Activated CD4-positive, alpha-beta T cell treated with anti-CD3 and anti-CD28 coated beads for 36 hours (primary cell): ENCODE measurements at regions of chr4 and their contacts with region 1.

Region 1: DNA sequence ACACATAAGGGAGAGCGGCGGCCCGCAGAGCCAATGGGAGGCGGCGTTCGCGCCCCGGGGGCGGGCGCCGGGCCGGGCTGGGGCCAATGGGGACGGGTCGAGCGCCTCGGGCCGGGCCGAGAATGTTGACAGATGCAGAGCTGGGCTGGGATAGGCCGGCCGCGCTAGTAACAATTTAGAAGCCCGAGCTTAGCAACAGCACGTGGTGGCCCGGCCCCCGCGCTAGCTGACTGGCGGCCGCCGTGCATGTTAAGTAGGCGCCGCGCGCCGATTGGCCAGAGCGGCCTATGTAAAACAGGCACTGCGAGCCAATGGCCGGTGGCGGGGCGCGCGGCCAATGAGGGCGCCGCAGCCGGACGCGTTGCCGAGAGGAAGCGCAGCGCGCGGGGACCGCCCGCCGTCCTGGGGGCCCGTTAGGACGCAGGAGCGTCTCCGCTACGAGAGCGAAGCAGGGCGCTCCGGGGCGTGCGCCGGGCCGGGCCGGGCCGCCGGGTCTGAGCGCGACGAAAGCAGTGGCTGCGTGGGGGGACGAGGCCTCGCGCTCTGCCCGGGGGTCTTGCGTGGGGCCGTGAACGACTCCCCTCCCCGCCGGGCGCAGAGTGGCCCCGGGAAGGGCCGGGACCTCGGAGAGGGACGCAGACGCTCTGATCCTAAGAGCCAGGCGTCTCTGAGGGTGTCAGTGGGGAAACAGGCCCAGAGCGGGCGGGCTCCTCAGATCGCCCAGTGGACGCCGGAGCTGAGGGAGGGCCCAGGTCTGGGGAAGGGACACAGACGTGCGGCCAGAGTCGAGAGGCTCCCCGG is 434 bp upstream of the MXD4 start:
- DNase-seq: peak; percentile 99
- ATAC-seq: peak; percentile 96
- H3K4me3 Mint-ChIP-seq: peak overlapping the region; percentile 61
- H3K27ac Mint-ChIP-seq: no peak overlapping the region
- H3K4me1 Mint-ChIP-seq: peaks cover 2% of the 10 kb centered on the region
- H3K27me3 Mint-ChIP-seq: no peaks in the 10 kb centered on the region

Region 2: DNA sequence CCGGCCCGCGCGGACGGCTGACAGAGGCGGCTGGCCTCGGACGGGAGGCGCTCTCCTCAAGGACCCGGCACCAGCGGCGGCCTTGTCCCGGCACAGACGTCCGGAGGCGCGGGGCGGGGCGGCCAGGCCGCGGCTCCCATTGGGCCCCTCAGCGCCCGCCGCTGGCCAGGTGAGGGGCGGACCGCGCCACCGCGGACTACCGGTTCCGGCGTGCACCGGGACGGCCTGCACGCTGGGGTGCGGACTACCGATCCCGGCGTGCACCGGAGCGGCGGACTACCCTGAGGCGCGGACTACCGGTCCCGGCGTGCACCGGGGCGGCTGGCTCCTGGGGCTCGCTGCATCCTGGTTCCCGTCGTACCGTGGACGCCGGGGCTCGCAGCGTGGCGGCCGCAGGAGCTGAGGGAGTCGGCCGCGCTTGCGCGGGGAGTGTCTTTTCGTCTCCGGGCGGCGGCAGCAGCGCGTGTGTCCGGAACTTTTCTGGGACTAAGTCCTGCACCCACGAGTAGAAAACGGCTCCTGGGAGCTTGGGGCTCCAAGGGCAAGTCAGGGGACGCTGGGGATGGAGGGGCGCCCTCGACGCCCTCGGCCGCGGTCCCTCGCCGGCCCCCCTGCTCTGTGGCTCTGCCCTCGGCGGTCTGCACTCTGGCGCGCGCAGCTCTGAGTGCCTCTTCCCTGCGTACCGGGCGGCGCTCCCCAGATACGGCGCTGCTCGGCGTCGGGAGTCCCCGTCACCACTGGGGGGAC is 406.1 kb before region 1 on chr4 and contains the start of gene LETM1:
- CTCF ChIA-PET with region 1: no interaction called
- POLR2A ChIA-PET with region 1: no interaction called
- intact Hi-C with region 1: loop called in 1 of 2 experiments (anchors 1 kb)
- DNase-seq: peak; percentile 97
- ATAC-seq: peak; percentile 99
- H3K4me3 Mint-ChIP-seq: peak within 1 kb of the TSS; percentile 78
- H3K27ac Mint-ChIP-seq: peak within 1 kb of the TSS; percentile 55
- H3K4me1 Mint-ChIP-seq: peaks cover 40% of the 10 kb centered on the region
- H3K27me3 Mint-ChIP-seq: no peaks in the 10 kb centered on the region
- total RNA-seq, gene LETM1: 41.6 to 51.3 TPM

Region 3: DNA sequence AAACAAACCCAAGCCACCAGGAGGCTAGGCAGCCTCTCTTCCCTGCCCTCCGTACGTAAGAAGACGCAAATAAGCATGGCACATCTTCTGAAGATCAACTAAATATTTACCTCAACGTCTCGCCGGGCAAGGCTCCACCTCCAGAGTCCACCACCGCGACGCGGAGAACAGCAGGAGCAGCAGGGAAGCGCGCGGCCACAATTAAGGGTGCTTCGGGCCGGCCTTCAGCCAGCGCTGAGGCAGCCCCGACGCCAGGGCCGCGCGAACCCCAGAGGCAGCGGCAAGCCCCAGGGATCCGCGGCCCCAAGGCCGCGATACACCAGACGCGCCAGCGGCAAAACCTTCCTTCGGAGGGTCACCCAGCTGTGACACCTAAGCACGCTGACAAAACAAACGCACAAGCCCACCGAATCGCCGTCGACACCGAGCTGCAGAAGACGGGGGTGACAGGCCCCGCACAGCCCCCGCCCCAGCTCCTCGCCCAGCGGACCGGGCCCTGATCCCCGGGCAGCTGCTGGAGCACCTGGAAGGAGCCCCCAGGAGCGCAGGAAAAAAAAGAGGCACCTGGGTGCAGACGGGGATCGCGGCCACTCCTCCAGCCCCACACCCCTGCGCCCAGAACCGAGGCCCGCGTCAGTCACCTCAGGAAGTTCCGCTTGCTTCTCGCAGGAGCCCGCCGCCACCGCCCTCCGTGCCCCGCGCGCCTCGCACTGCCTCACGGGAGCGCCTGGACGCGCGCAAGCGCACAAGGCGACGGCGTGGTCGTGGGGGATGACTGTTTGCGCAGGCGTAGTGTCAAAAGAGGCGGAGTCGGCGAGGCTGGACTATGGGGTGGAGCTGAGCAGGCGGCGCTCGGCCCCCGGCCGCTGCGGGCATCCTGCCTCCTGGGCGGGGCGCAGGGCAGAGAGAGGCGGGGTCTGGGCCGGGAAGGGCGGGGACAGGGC is 20.7 kb before region 1 on chr4 and contains the starts of genes HAUS3 and POLN:
- CTCF ChIA-PET with region 1: no interaction called
- POLR2A ChIA-PET with region 1: interaction called, 15 read pairs
- intact Hi-C with region 1: loop called (anchors 1 kb)
- DNase-seq: peak; percentile 99
- ATAC-seq: peak; percentile 97
- H3K4me3 Mint-ChIP-seq: peak within 1 kb of the TSS; percentile 91
- H3K27ac Mint-ChIP-seq: peak within 1 kb of the TSS; percentile 88
- H3K4me1 Mint-ChIP-seq: peaks cover 54% of the 10 kb centered on the region
- H3K27me3 Mint-ChIP-seq: no peaks in the 10 kb centered on the region
- total RNA-seq, gene HAUS3: 14.6 to 18.6 TPM
- total RNA-seq, gene POLN: 2.3 to 3.2 TPM

Region 4: GRCh38 chr4:2412885-2413716 is 150.8 kb after region 1 on chr4:
- CTCF ChIA-PET with region 1: interaction called, 4 read pairs
- POLR2A ChIA-PET with region 1: no interaction called
- intact Hi-C with region 1: loop called (anchors 1 kb)
- DNase-seq: peak; percentile 94
- ATAC-seq: peak; percentile 82
- H3K4me3 Mint-ChIP-seq: peak overlapping the region; percentile 70
- H3K27ac Mint-ChIP-seq: peak overlapping the region; percentile 97
- H3K4me1 Mint-ChIP-seq: peaks cover 69% of the 10 kb centered on the region
- H3K27me3 Mint-ChIP-seq: peaks cover 9% of the 10 kb centered on the region

Region 5: DNA sequence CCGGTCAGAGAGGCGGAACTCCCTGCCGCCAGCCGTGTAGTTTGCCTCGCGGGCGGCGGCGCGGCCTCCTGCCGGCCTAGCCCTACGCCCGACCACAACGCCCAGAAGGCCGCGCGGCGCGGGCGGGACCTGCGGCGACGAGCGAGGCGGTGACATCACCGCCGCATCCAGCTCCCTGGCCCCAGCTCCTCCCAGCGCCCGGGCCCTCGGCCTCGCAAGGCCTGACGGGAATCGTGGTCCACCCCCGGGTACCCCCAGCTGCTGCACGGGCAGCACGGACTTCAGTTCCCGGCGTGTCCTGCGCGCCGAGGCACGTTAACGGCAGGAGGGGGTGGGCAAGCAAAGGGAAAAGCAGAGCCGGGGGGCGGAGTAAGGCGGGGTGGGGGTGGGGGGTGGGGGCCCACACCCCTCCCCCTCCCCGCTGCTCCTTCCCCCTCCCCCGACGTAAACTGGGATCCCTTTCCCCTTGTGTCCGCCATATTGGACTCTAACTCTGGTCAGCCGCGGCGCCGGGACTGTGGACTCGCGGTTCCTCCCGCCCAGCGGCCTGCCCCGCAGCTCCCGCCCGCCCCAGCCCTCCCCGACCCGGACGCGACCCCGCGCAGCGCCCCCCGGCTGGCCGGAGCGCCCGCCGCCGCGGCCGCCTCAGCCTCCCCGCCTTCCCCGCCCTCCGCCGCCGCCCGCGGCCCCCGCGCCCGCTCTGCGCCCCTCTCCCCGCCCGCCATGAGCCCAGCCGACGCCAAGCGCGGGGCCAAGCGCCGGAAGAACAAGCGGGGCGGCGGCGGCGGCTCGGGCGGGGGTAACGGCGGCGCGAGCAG is 274.1 kb after region 1 on chr4 and contains the start of gene FAM193A:
- CTCF ChIA-PET with region 1: no interaction called
- POLR2A ChIA-PET with region 1: interaction called, 4 read pairs
- intact Hi-C with region 1: loop called in 1 of 2 experiments (anchors 1 kb)
- DNase-seq: peak; percentile 100
- ATAC-seq: peak; percentile 97
- H3K4me3 Mint-ChIP-seq: peak within 1 kb of the TSS; percentile 87
- H3K27ac Mint-ChIP-seq: peak within 1 kb of the TSS; percentile 88
- H3K4me1 Mint-ChIP-seq: peaks cover 24% of the 10 kb centered on the region
- H3K27me3 Mint-ChIP-seq: no peaks in the 10 kb centered on the region
- total RNA-seq, gene FAM193A: 22.1 to 30.1 TPM

Region 6: DNA sequence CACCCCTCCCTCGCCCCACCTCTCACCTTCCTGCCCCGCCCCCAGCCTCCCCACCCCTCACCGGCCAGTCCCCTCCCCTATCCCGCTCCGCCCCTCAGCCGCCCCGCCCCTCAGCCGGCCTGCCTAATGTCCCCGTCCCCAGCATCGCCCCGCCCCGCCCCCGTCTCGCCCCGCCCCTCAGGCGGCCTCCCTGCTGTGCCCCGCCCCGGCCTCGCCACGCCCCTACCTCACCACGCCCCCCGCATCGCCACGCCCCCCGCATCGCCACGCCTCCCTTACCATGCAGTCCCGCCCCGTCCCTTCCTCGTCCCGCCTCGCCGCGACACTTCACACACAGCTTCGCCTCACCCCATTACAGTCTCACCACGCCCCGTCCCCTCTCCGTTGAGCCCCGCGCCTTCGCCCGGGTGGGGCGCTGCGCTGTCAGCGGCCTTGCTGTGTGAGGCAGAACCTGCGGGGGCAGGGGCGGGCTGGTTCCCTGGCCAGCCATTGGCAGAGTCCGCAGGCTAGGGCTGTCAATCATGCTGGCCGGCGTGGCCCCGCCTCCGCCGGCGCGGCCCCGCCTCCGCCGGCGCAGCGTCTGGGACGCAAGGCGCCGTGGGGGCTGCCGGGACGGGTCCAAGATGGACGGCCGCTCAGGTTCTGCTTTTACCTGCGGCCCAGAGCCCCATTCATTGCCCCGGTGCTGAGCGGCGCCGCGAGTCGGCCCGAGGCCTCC is 811.9 kb after region 1 on chr4 and contains the starts of genes HTT and HTT-AS:
- CTCF ChIA-PET with region 1: no interaction called
- POLR2A ChIA-PET with region 1: no interaction called
- intact Hi-C with region 1: loop called in 1 of 2 experiments (anchors 1 kb)
- DNase-seq: peak; percentile 100
- ATAC-seq: peak; percentile 89
- H3K4me3 Mint-ChIP-seq: peak within 1 kb of the TSS; percentile 95
- H3K27ac Mint-ChIP-seq: peak within 1 kb of the TSS; percentile 90
- H3K4me1 Mint-ChIP-seq: peaks cover 24% of the 10 kb centered on the region
- H3K27me3 Mint-ChIP-seq: no peaks in the 10 kb centered on the region
- total RNA-seq, gene HTT: 80.1 to 127 TPM
- total RNA-seq, gene HTT-AS: not detected